CD14-positive monocyte (primary cell): ENCODE measurements at regions of chr5 and their contacts with region 1.

Region 1: DNA sequence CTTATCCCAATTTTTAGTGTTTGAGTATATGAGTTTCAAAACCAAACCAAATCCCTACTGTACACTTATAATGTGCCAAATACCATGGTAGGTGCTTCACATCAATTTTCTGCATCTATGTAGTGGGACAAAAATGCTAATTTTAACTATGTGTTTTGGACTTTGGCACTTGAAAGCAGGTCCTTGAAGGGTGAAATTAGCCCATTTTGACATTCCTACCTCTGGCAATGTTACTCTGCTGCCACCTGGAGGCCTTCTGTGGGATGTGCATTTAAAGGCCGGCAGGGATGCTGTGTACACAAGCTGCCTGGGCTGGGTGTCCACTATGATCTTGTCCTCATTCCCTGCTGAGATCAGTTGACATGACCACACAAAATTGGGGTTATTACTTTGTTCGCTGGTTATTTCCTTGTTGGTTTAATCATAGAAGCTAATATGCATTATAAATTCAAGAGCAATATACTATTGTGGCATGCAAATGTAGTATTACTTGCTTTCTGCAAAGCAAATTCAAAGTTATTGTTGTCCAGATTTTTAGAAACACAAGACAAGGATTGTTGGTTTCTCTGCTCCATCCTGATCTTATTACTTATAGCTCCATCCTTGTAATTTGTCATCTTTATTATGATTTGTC is 166.8 kb downstream of the ARHGEF28 start:
- DNase-seq: peak; percentile 44 to 59 (median 55)
- H3K4me3 ChIP-seq: no peak overlapping the region
- H3K4me3 Mint-ChIP-seq: no peak overlapping the region
- H3K27ac ChIP-seq: no peak overlapping the region
- H3K27ac Mint-ChIP-seq: no peak overlapping the region
- H3K4me1 ChIP-seq: peaks cover 9 to 15% of the 10 kb centered on the region in 2 donors
- H3K4me1 Mint-ChIP-seq: peaks cover 19% of the 10 kb centered on the region
- H3K27me3 ChIP-seq: no peaks in the 10 kb centered on the region
- H3K27me3 Mint-ChIP-seq: no peaks in the 10 kb centered on the region
- CTCF ChIP-seq: peak; percentile 90

Region 2: GRCh38 chr5:73591102-73591695 is 201.6 kb before region 1 on chr5:
- intact Hi-C with region 1: loop called (anchors 2 to 5 kb)
- DNase-seq: peak; percentile 43 to 61 (median 54)
- H3K4me3 ChIP-seq: no peak overlapping the region
- H3K4me3 Mint-ChIP-seq: no peak overlapping the region
- H3K27ac ChIP-seq: no peak overlapping the region
- H3K27ac Mint-ChIP-seq: no peak overlapping the region
- H3K4me1 ChIP-seq: no peaks in the 10 kb centered on the region
- H3K4me1 Mint-ChIP-seq: no peaks in the 10 kb centered on the region
- H3K27me3 ChIP-seq: no peaks in the 10 kb centered on the region
- H3K27me3 Mint-ChIP-seq: peaks cover 0 to 4% (median 1%) of the 10 kb centered on the region in 3 donors
- CTCF ChIP-seq: peak; percentile 87

Region 3: GRCh38 chr5:73844165-73844564 is 51.4 kb after region 1 on chr5:
- intact Hi-C with region 1: no loop called
- DNase-seq: no peak
- H3K4me3 ChIP-seq: no peak overlapping the region
- H3K4me3 Mint-ChIP-seq: no peak overlapping the region
- H3K27ac ChIP-seq: no peak overlapping the region
- H3K27ac Mint-ChIP-seq: no peak overlapping the region
- H3K4me1 ChIP-seq: no peaks in the 10 kb centered on the region
- H3K4me1 Mint-ChIP-seq: peaks cover 1% of the 10 kb centered on the region
- H3K27me3 ChIP-seq: no peaks in the 10 kb centered on the region
- H3K27me3 Mint-ChIP-seq: peaks cover 0 to 5% (median 3%) of the 10 kb centered on the region in 3 donors
- CTCF ChIP-seq: no peak